A673 (cell line): ENCODE measurements at regions of chr6 and their contacts with region 1.

Region 1: DNA sequence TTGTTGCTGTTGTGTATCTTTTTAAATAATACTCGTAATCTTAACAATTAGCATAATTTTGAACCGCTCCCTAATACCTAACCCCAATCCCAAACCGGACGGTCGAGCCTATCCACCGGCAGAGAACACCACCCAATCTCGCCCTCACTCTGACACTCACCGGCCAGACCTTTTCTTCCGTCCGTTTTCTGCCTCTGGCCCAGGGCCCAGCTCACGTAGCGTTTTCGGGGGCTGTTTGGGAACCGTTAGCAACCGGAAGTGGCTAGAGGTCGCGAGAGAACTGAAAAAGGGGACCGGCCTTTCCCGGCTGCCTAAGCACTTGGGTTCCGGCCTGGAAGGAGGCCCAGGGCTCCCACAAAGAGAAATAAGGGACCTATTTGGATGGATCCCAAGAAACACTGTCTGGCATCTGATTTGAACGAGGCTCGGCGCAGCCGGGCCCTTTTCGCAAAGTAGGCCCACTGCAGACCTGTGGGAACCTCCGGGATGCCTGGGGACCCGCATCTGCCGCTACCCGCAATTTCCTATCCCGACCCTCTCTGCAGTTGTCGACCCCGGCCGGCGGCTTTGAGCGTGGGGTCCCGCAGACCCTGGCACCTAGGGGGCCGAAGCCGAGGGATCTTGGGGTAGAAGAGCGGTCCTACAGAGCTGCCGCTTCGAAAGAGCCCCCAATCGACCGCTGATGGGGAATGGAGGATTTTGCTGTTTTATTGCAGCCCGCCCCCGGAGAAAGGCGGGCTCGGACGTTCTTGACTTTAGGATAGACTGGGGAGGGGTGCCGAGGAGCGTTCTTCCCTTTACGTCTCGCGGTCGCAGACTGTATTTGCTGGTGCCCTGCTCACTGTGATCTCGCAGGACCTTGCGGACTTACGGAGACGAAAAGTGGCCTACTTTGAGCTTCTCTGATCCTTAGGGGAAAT is 4.8 kb upstream of the ZKSCAN8 start:
- DNase-seq: peak; percentile 96
- H3K4me3 ChIP-seq: peak overlapping the region; percentile 64
- H3K27ac ChIP-seq: peak overlapping the region; percentile 93
- H3K4me1 ChIP-seq: peaks cover 18% of the 10 kb centered on the region
- H3K27me3 ChIP-seq: no peaks in the 10 kb centered on the region
- CTCF ChIP-seq: no peak

Region 2: DNA sequence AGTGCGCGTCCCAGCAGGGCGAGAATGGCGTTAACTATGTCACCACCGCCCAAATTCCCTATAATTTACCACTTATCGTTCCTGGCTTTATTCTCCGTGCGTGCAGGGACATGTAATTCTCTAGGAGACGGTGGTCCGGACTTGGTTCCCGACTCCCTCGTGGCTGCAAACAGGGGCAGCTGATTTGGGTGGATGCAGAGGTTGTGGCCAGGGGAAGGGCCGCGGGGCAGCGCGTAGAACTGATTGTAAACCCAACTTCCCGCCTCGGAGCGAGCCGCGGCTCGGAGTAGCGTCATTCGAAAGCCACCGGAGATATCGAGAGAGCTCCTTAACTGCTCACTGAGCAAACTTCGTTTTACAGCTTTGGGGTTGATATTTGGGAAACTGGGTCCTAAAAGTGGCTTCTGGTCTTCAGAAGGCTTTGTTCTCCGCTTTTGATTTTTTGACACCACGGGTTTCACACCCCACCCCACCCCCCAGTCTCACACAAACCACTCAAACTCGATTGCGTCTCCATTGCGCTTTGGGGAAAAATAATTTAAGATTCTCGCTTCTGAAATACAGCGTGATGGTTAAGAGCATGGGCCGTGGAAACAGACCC is 70.8 kb after region 1 on chr6:
- CTCF ChIA-PET with region 1: no interaction called
- POLR2A ChIA-PET with region 1: no interaction called
- intact Hi-C with region 1: loop called (anchors 5 kb)
- DNase-seq: peak; percentile 66
- H3K4me3 ChIP-seq: peak overlapping the region; percentile 55
- H3K27ac ChIP-seq: no peak overlapping the region
- H3K4me1 ChIP-seq: peaks cover 5% of the 10 kb centered on the region
- H3K27me3 ChIP-seq: no peaks in the 10 kb centered on the region
- CTCF ChIP-seq: no peak

Region 3: GRCh38 chr6:28252009-28252975 is 115.4 kb after region 1 on chr6 and contains the start of gene ZKSCAN4:
- CTCF ChIA-PET with region 1: no interaction called
- POLR2A ChIA-PET with region 1: interaction called, 16 read pairs
- intact Hi-C with region 1: loop called (anchors 10 kb)
- DNase-seq: peak; percentile 92
- H3K4me3 ChIP-seq: peak within 1 kb of the TSS; percentile 100
- H3K27ac ChIP-seq: peak within 1 kb of the TSS; percentile 79
- H3K4me1 ChIP-seq: peaks cover 6% of the 10 kb centered on the region
- H3K27me3 ChIP-seq: no peaks in the 10 kb centered on the region
- CTCF ChIP-seq: no peak
- total RNA-seq, gene ZKSCAN4: 6.4 and 6.6 TPM in 2 replicates

Region 4: DNA sequence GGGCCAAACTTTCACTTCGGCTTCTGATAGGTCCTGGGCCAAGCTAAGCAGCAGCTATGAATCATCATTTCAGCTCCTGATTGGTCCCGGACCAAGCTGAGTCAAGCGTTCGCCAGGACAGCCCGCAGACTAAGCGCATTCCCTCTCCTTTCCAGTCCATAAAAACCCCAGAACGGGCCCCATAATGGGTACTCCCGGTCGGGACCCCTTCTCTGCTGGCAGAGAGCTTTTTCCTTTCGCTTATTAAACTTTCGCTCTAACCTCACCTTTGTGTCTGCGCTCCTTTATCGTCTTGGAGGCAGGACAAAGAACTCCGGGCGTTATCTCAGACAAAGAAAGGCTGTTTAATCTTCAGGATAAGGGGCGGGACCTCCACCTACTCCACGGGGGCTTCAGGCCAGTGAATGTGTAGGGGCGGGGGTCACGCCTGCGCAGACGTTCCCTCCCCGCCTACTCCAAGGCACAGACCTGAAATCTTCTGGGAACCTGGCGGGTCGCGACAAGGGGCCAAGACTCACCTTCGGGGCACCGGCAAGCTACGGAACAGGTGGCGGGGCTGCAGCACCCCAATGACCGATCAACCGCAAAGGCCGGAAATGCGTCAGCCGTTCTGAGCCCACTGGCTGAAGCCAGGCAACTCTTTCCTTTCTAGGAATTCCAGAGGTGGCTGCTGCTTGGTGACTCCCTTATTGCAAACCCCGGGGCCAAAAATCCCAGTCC is 198.9 kb after region 1 on chr6 and contains the start of gene ZSCAN31:
- CTCF ChIA-PET with region 1: no interaction called
- POLR2A ChIA-PET with region 1: no interaction called
- intact Hi-C with region 1: loop called (anchors 5 kb)
- DNase-seq: peak; percentile 97
- H3K4me3 ChIP-seq: peak within 1 kb of the TSS; percentile 55
- H3K27ac ChIP-seq: peak within 1 kb of the TSS; percentile 97
- H3K4me1 ChIP-seq: no peaks in the 10 kb centered on the region
- H3K27me3 ChIP-seq: no peaks in the 10 kb centered on the region
- CTCF ChIP-seq: no peak
- total RNA-seq, gene ZSCAN31: 3.5 and 4.3 TPM in 2 replicates

Region 5: GRCh38 chr6:28355743-28356665 is 219.2 kb after region 1 on chr6:
- CTCF ChIA-PET with region 1: interaction called, 5 read pairs
- POLR2A ChIA-PET with region 1: interaction called, 4 read pairs
- intact Hi-C with region 1: loop called (anchors 2 kb)
- DNase-seq: peak; percentile 95
- H3K4me3 ChIP-seq: peak overlapping the region; percentile 58
- H3K27ac ChIP-seq: peak overlapping the region; percentile 48
- H3K4me1 ChIP-seq: peaks cover 8% of the 10 kb centered on the region
- H3K27me3 ChIP-seq: no peaks in the 10 kb centered on the region
- CTCF ChIP-seq: peak; percentile 70

Region 6: GRCh38 chr6:28586962-28587745 is 450.3 kb after region 1 on chr6:
- CTCF ChIA-PET with region 1: no interaction called
- POLR2A ChIA-PET with region 1: no interaction called
- intact Hi-C with region 1: loop called (anchors 10 kb)
- DNase-seq: peak; percentile 69
- H3K4me3 ChIP-seq: peak overlapping the region; percentile 59
- H3K27ac ChIP-seq: peak overlapping the region; percentile 55
- H3K4me1 ChIP-seq: peaks cover 21% of the 10 kb centered on the region
- H3K27me3 ChIP-seq: no peaks in the 10 kb centered on the region
- CTCF ChIP-seq: no peak